CD4-positive, alpha-beta memory T cell (primary cell): ENCODE measurements at regions of chr16 and their contacts with region 1.

Region 1: DNA sequence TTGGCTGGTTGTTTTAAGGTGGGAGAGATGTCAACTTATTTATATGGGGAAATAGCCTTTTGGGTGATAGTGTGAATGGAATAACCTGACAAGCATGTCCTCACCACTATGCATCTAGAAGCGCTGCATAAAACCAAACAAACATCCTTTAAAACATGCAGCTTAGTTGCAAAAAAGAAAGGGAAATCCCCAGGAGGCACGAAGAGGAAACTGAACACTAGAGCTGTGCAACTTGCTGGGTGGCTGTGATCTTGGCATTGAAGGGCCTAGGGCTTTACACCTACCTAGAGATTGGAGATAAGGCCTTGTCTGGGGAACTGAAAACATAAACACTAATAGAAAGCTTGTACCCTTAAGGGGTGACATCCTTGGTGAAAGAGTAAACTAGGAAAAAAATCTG is 7.3 kb downstream of the C16orf54 start:
- DNase-seq: peak; percentile 80 to 87 (median 84)
- H3K4me3 ChIP-seq: no peak overlapping the region
- H3K4me3 Mint-ChIP-seq: peak overlapping the region; percentile 3 to 73 (median 68)
- H3K27ac ChIP-seq: peak overlapping the region; percentile 62
- H3K27ac Mint-ChIP-seq: peak overlapping the region; percentile 90 to 100 (median 94)
- H3K4me1 ChIP-seq: peaks cover 81% of the 10 kb centered on the region
- H3K4me1 Mint-ChIP-seq: peaks cover 63 to 91% (median 74%) of the 10 kb centered on the region in 4 donors
- H3K27me3 ChIP-seq: no peaks in the 10 kb centered on the region
- H3K27me3 Mint-ChIP-seq: no peaks in the 10 kb centered on the region

Region 2: DNA sequence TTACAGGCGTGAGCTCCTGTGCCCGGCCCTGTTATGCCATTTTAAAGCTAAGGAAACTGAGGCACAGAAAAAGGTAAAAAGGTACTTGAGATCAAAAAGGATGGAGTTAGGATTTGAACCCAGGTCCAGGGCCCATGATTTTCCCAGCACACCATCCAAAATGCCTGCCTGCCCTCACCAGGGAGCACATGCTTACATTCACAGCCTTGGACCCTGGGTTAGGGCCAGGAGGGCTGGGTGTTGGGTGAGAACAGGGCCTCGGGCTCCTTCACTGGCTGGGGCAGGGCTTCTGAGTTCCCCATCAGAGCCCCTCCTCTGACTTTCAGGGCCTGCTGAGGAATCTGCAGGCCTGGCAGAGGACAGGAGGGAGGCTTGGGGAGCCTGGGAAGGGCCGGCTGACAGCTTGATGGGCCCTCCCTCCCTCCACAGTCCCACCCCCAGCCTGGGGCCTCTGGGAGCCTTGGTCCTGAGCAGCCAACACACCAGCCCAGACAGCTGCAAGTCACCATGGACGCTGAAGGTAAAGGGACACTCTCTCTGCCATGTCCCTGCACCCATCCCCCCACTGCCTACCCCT is 59.7 kb before region 1 on chr16 and contains the start of gene QPRT:
- CTCF ChIA-PET with region 1: no interaction called
- POLR2A ChIA-PET with region 1: no interaction called
- intact Hi-C with region 1: no loop called
- DNase-seq: no peak
- H3K4me3 ChIP-seq: peak within 1 kb of the TSS; percentile 9 to 36
- H3K4me3 Mint-ChIP-seq: peak within 1 kb of the TSS; percentile 56 to 80 (median 70)
- H3K27ac ChIP-seq: no peak within 1 kb of the TSS
- H3K27ac Mint-ChIP-seq: peak within 1 kb of the TSS; percentile 50 to 95 (median 86)
- H3K4me1 ChIP-seq: peaks cover 24% of the 10 kb centered on the region
- H3K4me1 Mint-ChIP-seq: peaks cover 12 to 35% (median 15%) of the 10 kb centered on the region in 4 donors
- H3K27me3 ChIP-seq: no peaks in the 10 kb centered on the region
- H3K27me3 Mint-ChIP-seq: no peaks in the 10 kb centered on the region
- total RNA-seq, gene QPRT: 0.99 to 1.1 TPM

Region 3: GRCh38 chr16:29757950-29758466 is 19.5 kb after region 1 on chr16:
- CTCF ChIA-PET with region 1: interaction called, 7 read pairs
- POLR2A ChIA-PET with region 1: interaction called, 23 read pairs
- intact Hi-C with region 1: no loop called
- DNase-seq: no peak
- H3K4me3 ChIP-seq: no peak overlapping the region
- H3K4me3 Mint-ChIP-seq: no peak overlapping the region
- H3K27ac ChIP-seq: no peak overlapping the region
- H3K27ac Mint-ChIP-seq: peak overlapping the region in 3 of 7 donors; percentile 6 to 75 (median 46)
- H3K4me1 ChIP-seq: peaks cover 23% of the 10 kb centered on the region
- H3K4me1 Mint-ChIP-seq: peaks cover 19 to 43% (median 27%) of the 10 kb centered on the region in 4 donors
- H3K27me3 ChIP-seq: no peaks in the 10 kb centered on the region
- H3K27me3 Mint-ChIP-seq: no peaks in the 10 kb centered on the region

Region 4: DNA sequence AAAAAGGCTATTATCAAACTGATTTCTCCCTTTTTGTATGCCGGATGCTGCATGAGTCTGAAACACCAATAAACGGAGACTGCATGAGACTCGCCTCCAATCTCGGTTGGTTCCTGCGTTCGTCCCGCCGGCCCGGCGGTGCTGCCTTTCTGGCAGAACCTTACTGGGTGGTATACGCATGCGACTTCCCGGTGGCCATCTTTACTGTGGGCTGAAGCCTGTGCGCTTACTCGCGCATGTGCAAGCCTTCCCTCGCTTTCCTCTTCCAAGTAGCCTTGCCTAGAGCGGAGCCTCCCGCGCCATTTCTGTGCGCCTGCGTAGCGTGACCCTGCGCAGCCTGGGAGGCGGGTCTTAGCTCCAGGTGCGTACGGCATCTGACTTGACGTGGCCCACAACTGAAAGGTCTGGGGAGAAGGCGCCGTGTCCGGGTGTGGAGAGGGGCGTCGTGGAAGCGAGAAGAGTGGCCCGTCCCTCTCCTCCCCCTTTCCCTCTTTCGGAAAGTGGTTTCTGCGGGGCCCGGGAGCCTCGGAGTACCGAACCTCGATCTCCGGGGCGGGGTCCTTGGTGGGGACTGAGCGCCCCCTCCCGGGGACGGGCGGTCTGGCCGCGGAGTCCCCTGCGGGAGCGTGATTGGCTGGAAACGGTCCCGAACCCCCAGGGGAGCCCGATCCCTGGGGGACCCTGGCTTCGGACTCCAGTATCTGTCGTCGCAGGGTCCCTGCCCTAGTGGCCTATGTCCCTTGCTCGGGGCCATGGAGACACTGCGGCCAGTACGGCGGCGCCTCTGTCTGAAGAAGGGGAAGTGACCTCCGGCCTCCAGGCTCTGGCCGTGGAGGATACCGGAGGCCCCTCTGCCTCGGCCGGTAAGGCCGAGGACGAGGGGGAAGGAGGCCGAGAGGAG is 77.5 kb after region 1 on chr16 and contains the start of gene PAGR1:
- CTCF ChIA-PET with region 1: interaction called, 6 read pairs
- POLR2A ChIA-PET with region 1: interaction called, 64 read pairs
- intact Hi-C with region 1: loop called (anchors 2 kb)
- DNase-seq: peak; percentile 99 to 100 (median 99)
- H3K4me3 ChIP-seq: peak within 1 kb of the TSS; percentile 91 to 95
- H3K4me3 Mint-ChIP-seq: peak within 1 kb of the TSS; percentile 95 to 99 (median 98)
- H3K27ac ChIP-seq: peak within 1 kb of the TSS; percentile 77
- H3K27ac Mint-ChIP-seq: peak within 1 kb of the TSS; percentile 94 to 100 (median 98)
- H3K4me1 ChIP-seq: peaks cover 66% of the 10 kb centered on the region
- H3K4me1 Mint-ChIP-seq: peaks cover 30 to 87% (median 56%) of the 10 kb centered on the region in 4 donors
- H3K27me3 ChIP-seq: no peaks in the 10 kb centered on the region
- H3K27me3 Mint-ChIP-seq: peaks cover 0 to 2% of the 10 kb centered on the region in 2 donors
- total RNA-seq, gene PAGR1: 43.7 to 44.9 TPM